Mammary epithelial cell (primary cell): ENCODE measurements at regions of chr1 and their contacts with region 1.

Region 1: DNA sequence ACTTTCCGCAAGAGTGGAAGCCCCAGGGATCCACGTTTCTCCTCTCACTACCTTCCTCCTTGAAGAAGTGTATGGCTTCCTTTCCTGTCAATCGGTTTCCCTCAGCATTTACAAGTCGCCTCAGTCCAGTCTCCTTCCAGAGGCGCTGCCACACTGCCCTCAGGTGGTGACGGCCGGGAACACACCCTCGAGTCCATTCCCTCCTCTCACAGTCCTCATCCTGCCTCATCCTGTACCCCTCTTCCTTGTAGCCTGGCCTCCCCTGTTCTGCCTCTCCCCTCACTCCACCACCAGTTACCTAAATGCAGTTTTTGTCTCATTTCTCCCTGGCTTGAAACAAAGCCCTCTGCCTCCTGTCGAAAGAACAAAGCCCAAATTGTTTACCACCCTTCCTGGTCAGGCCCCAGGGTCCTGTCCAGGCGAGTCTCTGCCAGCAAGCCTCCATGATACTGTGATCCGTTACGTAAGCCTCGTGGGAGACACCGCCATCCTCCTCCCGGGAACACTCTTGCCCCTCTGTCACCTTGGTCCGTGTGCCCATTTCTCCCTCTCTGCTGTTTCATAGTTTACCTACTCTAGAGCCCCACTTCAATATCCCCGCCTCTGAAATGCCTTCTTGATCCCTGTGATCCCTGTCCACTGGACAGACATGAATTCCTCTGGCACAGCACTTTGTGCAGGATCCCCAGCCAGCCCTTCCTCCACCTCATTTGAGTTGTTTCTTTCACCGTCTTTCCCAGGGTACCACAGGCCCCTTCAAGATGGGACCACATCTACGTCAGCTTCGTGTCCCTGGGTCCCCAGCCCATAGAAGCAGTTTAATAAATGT is 23.3 kb upstream of the LSM10 start:
- DNase-seq: peak; percentile 76
- H3K4me3 ChIP-seq: no peak overlapping the region
- H3K27ac ChIP-seq: peak overlapping the region; percentile 49
- H3K4me1 ChIP-seq: peaks cover 18% of the 10 kb centered on the region
- H3K27me3 ChIP-seq: no peaks in the 10 kb centered on the region
- CTCF ChIP-seq: peak; percentile 86 to 97

Region 2: GRCh38 chr1:36040238-36040637 is 380.8 kb before region 1 on chr1:
- CTCF ChIA-PET with region 1: no interaction called
- dilution Hi-C with region 1: no loop called
- in situ Hi-C with region 1: no loop called
- intact Hi-C with region 1: no loop called
- DNase-seq: no peak
- H3K4me3 ChIP-seq: no peak overlapping the region
- H3K27ac ChIP-seq: no peak overlapping the region
- H3K4me1 ChIP-seq: peaks cover under 1% of the 10 kb centered on the region
- H3K27me3 ChIP-seq: no peaks in the 10 kb centered on the region
- CTCF ChIP-seq: no peak

Region 3: GRCh38 chr1:36187800-36188593 is 233.1 kb before region 1 on chr1:
- CTCF ChIA-PET with region 1: no interaction called
- dilution Hi-C with region 1: no loop called
- in situ Hi-C with region 1: no loop called
- intact Hi-C with region 1: loop called (anchors 2 kb)
- DNase-seq: peak; percentile 88
- H3K4me3 ChIP-seq: no peak overlapping the region
- H3K27ac ChIP-seq: peak overlapping the region; percentile 60
- H3K4me1 ChIP-seq: peaks cover 8% of the 10 kb centered on the region
- H3K27me3 ChIP-seq: no peaks in the 10 kb centered on the region
- CTCF ChIP-seq: peak; percentile 92 to 94

Region 4: GRCh38 chr1:36300526-36300925 is 120.5 kb before region 1 on chr1:
- CTCF ChIA-PET with region 1: no interaction called
- dilution Hi-C with region 1: no loop called
- in situ Hi-C with region 1: no loop called
- intact Hi-C with region 1: loop called (anchors 1 kb)
- DNase-seq: peak; percentile 70
- H3K4me3 ChIP-seq: no peak overlapping the region
- H3K27ac ChIP-seq: peak overlapping the region; percentile 87
- H3K4me1 ChIP-seq: peaks cover 28% of the 10 kb centered on the region
- H3K27me3 ChIP-seq: no peaks in the 10 kb centered on the region
- CTCF ChIP-seq: no peak

Region 5: GRCh38 chr1:36350659-36351226 is 70.3 kb before region 1 on chr1:
- CTCF ChIA-PET with region 1: no interaction called
- dilution Hi-C with region 1: no loop called
- in situ Hi-C with region 1: loop called in 1 of 2 experiments (anchors 10 kb)
- intact Hi-C with region 1: loop called (anchors 2 kb)
- DNase-seq: peak; percentile 74
- H3K4me3 ChIP-seq: no peak overlapping the region
- H3K27ac ChIP-seq: peak overlapping the region; percentile 87
- H3K4me1 ChIP-seq: peaks cover 52% of the 10 kb centered on the region
- H3K27me3 ChIP-seq: no peaks in the 10 kb centered on the region
- CTCF ChIP-seq: no peak

Region 6: DNA sequence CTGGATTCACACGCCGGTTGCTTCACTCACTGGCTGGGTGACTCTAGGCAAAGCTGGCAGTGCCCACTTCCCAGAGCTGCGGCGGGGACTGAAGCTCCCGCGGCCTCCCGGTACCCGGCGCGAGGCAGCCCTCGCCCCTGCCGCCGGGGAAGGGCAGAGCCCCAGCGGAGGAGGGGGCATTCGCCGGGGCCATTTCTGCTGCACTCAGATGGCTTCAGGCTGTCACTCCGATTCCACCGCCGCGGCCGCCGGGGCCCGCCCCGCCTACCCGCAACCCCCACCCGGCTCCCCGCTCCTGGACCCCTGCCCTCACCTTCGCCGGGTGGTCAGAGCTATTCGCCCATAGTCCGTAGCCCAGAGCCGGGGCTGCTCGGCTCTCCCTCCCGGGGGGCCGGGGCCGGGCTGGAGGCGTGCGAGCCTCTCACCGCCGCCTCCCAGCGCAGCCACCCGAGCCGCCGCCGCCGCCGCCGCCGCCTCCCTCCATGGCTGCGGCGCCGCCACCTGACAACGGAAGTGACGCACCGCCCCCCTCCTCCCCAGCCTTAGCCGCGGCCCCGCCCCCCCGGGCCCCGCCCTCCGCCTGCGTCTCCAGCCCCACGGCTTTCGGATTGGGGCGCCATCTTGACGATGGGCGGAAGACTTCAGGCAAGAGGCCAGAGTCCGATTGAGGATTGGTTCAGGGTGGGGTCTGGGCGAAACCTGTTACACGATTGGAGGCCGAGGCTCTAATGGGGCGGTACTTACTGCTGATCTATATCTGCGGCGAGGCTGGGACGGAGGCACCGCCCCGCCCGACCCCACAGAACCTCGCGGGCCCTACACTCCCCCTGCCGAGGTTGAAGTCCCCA is 35.4 kb before region 1 on chr1 and contains the start of gene STK40:
- CTCF ChIA-PET with region 1: interaction called, 6 read pairs
- dilution Hi-C with region 1: loop called (anchors 5 kb)
- in situ Hi-C with region 1: no loop called
- intact Hi-C with region 1: loop called (anchors 2 kb)
- DNase-seq: peak; percentile 99
- H3K4me3 ChIP-seq: peak within 1 kb of the TSS; percentile 66 to 79 (median 70)
- H3K27ac ChIP-seq: peak within 1 kb of the TSS; percentile 100
- H3K4me1 ChIP-seq: peaks cover 31% of the 10 kb centered on the region
- H3K27me3 ChIP-seq: no peaks in the 10 kb centered on the region
- CTCF ChIP-seq: no peak
- total RNA-seq, gene STK40: 13.2 to 21.3 TPM